Tibial artery (tissue), 4 donors: ENCODE measurements at regions of chr15 and their contacts with region 1.

Region 1: DNA sequence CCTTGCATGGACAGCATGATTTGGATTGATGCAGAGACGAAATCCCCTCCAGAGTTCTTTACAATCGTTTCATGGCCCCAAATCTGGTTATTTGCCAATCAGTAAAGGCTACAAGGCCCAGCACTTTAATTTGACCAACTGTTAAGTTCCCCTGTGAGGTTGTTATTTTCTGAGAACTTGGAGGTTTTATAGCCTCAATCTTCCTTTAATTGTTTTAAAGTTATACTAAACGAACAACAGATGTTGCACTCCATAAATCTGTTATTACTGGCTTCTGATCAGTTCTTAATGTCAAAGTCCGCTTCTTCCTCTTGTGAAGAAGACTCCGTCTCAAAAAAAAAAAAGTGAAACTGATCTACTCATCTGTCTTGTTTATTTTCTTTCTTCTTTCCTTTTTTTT is 30.8 kb downstream of the LARP6 start:
- DNase-seq: no peak
- H3K4me3 ChIP-seq: no peak overlapping the region
- H3K27ac ChIP-seq: no peak overlapping the region
- H3K4me1 ChIP-seq: peaks cover 0 to 22% (median 9%) of the 10 kb centered on the region in 4 donors
- H3K27me3 ChIP-seq: no peaks in the 10 kb centered on the region
- CTCF ChIP-seq: no peak

Region 2: GRCh38 chr15:70876011-70876410 is 52.8 kb after region 1 on chr15:
- intact Hi-C with region 1: loop called (anchors 2 kb)
- DNase-seq: no peak
- H3K4me3 ChIP-seq: no peak overlapping the region
- H3K27ac ChIP-seq: no peak overlapping the region
- H3K4me1 ChIP-seq: no peaks in the 10 kb centered on the region
- H3K27me3 ChIP-seq: no peaks in the 10 kb centered on the region
- CTCF ChIP-seq: no peak

Region 3: GRCh38 chr15:71103102-71103676 is 280.0 kb after region 1 on chr15:
- intact Hi-C with region 1: no loop called
- DNase-seq: no peak
- H3K4me3 ChIP-seq: no peak overlapping the region
- H3K27ac ChIP-seq: no peak overlapping the region
- H3K4me1 ChIP-seq: no peaks in the 10 kb centered on the region
- H3K27me3 ChIP-seq: no peaks in the 10 kb centered on the region
- CTCF ChIP-seq: peak; percentile 47 to 56